Sigmoid colon (tissue), 7 donors: ENCODE measurements at regions of chr21 and their contacts with region 1.

Region 1: DNA sequence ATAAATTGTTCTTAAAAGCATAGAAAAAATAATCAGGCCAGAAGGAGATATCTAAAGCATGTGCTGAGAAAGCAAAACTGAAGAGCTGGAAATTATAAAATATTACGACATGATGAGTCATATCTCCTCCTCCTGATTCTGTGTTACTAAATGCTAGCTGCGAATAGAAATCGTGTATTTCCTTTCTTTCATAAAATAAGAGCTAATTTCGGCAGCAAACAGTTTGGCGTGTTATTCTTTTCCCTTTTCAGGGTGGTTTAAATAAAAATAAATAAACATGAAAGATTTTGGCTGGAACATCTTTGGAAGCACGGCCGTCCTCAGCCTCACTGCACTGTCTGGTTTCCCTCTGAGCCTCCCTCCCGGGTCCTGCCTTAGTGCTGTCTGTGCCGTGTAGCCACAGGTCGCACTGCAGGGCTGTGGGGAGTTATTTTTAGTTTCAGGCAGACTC is 56.0 kb downstream of the ADARB1 start:
- DNase-seq: peak; percentile 85
- H3K4me3 ChIP-seq: peak overlapping the region in 3 of 4 donors; percentile 24 to 32 (median 27)
- H3K27ac ChIP-seq: peak overlapping the region; percentile 74 to 86 (median 82)
- H3K4me1 ChIP-seq: peaks cover 0 to 86% (median 71%) of the 10 kb centered on the region in 4 donors
- H3K27me3 ChIP-seq: no peaks in the 10 kb centered on the region
- CTCF ChIP-seq: no peak
- EP300 ChIP-seq: peak in 1 of 4 donors; percentile 59
- POLR2A ChIP-seq: peak in 1 of 2 donors; percentile 18

Region 2: GRCh38 chr21:44958471-44959191 is 171.7 kb before region 1 on chr21:
- intact Hi-C with region 1: loop called (anchors 2 kb)
- DNase-seq: peak; percentile 92
- H3K4me3 ChIP-seq: peak overlapping the region in 3 of 4 donors; percentile 9 to 27 (median 26)
- H3K27ac ChIP-seq: peak overlapping the region; percentile 79 to 91 (median 86)
- H3K4me1 ChIP-seq: peaks cover 0 to 77% (median 65%) of the 10 kb centered on the region in 4 donors
- H3K27me3 ChIP-seq: no peaks in the 10 kb centered on the region
- CTCF ChIP-seq: no peak
- EP300 ChIP-seq: peak in 1 of 4 donors; percentile 35
- POLR2A ChIP-seq: no peak